ENCODE measurements at regions of chr7 and their contacts with region 1.

Region 1: DNA sequence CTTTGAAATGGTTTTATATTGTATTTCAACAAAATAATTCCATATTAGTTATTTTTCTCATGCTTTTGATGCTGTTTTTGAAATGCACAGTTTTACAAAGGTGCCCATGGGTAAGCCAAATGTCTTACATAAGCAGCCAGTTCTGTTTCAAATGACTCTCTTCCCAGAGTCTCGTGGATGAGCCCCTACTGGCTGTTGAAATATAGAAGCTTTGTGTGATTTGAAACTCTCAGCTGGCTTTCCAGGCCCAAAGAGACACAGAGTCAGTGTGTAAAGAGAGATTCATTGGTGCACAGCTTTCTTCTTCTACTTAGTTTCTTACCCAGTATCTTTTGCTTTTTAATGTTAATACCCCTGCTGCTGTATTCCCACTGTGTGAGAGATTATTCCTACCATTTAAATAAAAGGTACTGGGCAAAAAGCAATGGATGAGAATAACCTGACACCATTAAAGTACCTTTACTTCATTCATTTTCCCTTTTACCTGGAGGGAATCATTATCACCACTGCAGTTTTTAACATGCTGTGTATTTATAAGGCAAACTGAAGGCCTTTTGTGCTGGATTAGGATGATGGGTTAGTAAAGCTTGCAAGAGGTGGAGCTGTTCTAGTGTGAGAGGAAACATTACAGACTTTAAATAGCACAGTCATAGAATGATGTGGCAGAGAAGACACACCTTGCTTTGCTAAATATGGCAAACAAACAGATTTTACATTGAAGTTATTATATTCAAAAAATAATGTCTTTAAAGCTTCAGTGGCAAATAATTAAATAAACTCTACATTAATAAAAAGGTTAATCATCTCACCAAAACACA is 415.1 kb downstream of the THSD7A start:
- DNase-seq: no peak
- H3K4me3 ChIP-seq: no peak overlapping the region
- H3K27ac ChIP-seq: no peak overlapping the region
- H3K4me1 ChIP-seq: no peaks in the 10 kb centered on the region
- H3K27me3 ChIP-seq: no peaks in the 10 kb centered on the region
- CTCF ChIP-seq: no peak
- POLR2A ChIP-seq: no peak

Region 2: DNA sequence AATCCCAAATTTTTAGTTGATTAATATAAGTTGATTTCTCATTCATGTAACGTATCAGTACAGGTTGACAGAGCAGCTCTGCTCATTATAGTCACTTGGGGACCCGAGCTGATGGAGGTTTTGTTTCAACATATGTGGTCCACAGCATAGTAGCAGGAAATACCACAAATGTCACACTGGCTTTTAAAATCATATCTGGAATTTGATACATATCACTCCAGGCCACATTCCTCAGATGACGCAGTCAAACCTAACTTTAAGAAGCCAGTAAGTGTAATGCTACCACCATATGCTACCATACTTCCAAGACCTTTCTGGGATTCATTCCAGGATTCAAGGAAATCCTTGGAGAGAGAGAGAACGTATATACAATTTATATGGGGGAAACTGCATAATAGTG is 286.8 kb before region 1 on chr7:
- intact Hi-C with region 1: no loop called
- DNase-seq: no peak
- H3K4me3 ChIP-seq: no peak overlapping the region
- H3K27ac ChIP-seq: no peak overlapping the region
- H3K4me1 ChIP-seq: no peaks in the 10 kb centered on the region
- H3K27me3 ChIP-seq: no peaks in the 10 kb centered on the region
- CTCF ChIP-seq: no peak
- POLR2A ChIP-seq: no peak

Region 3: DNA sequence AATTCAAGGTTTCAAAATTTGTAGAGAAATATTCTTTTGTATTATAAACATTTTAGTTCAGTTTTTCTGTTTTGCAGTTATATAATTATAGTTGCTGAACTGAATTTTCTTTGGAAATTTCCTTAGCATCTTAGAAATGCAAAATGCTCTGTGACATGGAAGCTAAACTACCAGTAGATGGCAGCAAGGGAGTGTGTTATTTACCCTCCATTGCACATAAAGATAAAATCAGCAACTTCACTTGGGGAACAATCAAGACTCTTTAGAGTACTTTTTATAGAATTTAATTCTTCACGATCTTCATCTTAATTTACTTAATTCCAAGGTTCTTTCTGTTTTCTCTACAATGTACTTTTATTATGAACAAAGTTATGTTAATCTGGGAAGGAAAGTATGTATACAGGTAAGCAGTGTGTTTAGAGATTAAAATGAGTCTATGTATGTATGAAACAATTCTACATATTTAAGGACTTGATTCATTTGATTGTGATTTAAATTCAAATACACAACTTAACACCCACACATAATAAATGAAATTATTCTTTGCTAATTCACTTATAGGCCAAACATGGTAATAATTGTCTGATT is 10.9 kb after region 1 on chr7:
- intact Hi-C with region 1: loop called (anchors 1 kb)
- DNase-seq: no peak
- H3K4me3 ChIP-seq: no peak overlapping the region
- H3K27ac ChIP-seq: no peak overlapping the region
- H3K4me1 ChIP-seq: no peaks in the 10 kb centered on the region
- H3K27me3 ChIP-seq: no peaks in the 10 kb centered on the region
- CTCF ChIP-seq: peak; percentile 46 to 67 (median 56)
- POLR2A ChIP-seq: no peak

Measured in breast epithelium (tissue), 4 donors.